ENCODE measurements at regions of chr6 and their contacts with region 1.

Region 1: GRCh38 chr6:154928325-154928922 is 66.7 kb upstream of the TIAM2 start:
- DNase-seq: peak; percentile 69
- H3K4me3 Mint-ChIP-seq: no peak overlapping the region
- H3K27ac Mint-ChIP-seq: no peak overlapping the region
- H3K4me1 Mint-ChIP-seq: peaks cover 7% of the 10 kb centered on the region
- H3K27me3 Mint-ChIP-seq: no peaks in the 10 kb centered on the region

Region 2: GRCh38 chr6:154675602-154676088 is 252.8 kb before region 1 on chr6:
- CTCF ChIA-PET with region 1: interaction called, 31 read pairs
- POLR2A ChIA-PET with region 1: no interaction called
- DNase-seq: peak; percentile 89
- H3K4me3 Mint-ChIP-seq: no peak overlapping the region
- H3K27ac Mint-ChIP-seq: no peak overlapping the region
- H3K4me1 Mint-ChIP-seq: no peaks in the 10 kb centered on the region
- H3K27me3 Mint-ChIP-seq: no peaks in the 10 kb centered on the region

Region 3: DNA sequence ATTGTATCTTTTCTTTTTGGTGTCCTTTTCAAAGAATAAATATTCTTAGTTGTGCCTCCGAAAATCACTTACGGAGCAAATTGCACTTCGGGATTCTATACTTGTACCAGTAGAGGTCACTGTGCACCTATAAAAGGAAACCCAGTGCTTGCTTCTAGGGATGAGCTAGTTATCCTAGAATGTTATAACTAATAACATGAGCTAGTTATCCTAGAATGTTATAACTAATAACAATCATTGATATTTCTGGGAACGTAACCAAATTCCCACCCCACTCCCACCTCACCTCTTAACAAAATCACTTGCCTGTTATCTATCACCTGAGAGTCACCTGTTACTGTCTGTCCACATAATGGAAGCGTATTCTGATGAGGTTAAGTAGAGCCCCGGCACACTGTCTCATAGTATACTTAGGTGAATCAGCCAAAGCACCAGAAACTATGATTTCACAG is 60.3 kb before region 1 on chr6:
- CTCF ChIA-PET with region 1: interaction called, 13 read pairs
- POLR2A ChIA-PET with region 1: no interaction called
- DNase-seq: no peak
- H3K4me3 Mint-ChIP-seq: no peak overlapping the region
- H3K27ac Mint-ChIP-seq: no peak overlapping the region
- H3K4me1 Mint-ChIP-seq: peaks cover 4% of the 10 kb centered on the region
- H3K27me3 Mint-ChIP-seq: no peaks in the 10 kb centered on the region

Region 4: GRCh38 chr6:155041741-155042279 is 113.4 kb after region 1 on chr6:
- CTCF ChIA-PET with region 1: no interaction called
- POLR2A ChIA-PET with region 1: no interaction called
- DNase-seq: no peak
- H3K4me3 Mint-ChIP-seq: no peak overlapping the region
- H3K27ac Mint-ChIP-seq: no peak overlapping the region
- H3K4me1 Mint-ChIP-seq: peaks cover 7% of the 10 kb centered on the region
- H3K27me3 Mint-ChIP-seq: no peaks in the 10 kb centered on the region

Region 5: GRCh38 chr6:155154158-155154830 is 225.9 kb after region 1 on chr6:
- CTCF ChIA-PET with region 1: interaction called, 11 read pairs
- POLR2A ChIA-PET with region 1: no interaction called
- DNase-seq: peak; percentile 54
- H3K4me3 Mint-ChIP-seq: peak overlapping the region; percentile 62
- H3K27ac Mint-ChIP-seq: peak overlapping the region; percentile 91
- H3K4me1 Mint-ChIP-seq: peaks cover 82% of the 10 kb centered on the region
- H3K27me3 Mint-ChIP-seq: no peaks in the 10 kb centered on the region

Measured in activated CD4-positive, alpha-beta memory T cell treated with anti-CD3 and anti-CD28 coated beads, Interleukin-2, amount 10 ng/mL, durations not matched to agents 7 days and 5 days (primary cell).